SK-N-SH (cell line): ENCODE measurements at regions of chr15 and their contacts with region 1.

Region 1: DNA sequence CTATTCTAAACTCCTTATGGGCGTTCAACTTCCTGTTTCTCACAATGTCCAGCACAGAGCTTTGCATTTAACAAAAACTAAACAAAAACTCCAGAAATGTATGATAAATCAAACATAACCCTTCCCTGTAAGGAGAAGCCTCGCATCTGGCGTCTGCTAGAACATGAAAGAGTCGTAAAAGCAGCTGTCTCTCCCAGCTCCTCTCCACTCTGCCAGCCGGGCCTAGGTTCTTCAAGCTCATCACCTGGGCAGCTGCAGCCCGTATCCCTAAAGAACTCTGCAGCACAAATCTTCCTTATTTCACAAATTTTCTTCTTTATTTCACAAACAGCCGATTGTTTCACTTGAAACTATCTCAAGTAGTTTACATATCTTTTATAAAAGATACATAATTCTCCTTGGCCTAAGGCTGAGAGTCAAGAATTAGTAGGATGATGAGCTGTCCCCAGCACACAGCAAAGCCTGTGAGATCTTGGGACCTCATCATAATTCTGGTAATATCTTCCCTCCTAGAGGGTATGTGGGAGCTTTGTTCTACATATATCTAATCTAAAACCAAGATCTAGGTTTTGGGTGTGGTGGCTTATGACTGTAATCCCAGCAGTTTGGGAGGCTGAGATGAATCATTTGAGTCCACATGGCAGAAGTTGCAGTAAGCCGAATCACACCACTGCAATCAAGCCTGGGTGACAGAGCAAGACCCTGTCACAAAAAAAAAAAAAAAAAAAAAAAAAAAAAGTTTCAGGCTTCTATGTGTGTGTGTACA is 35.3 kb downstream of the ANXA2 start:
- DNase-seq: no peak
- H3K4me3 ChIP-seq: no peak overlapping the region
- H3K27ac ChIP-seq: peak overlapping the region; percentile 65 to 97
- H3K4me1 ChIP-seq: peaks cover 27 to 38% of the 10 kb centered on the region in 2 experiments
- H3K27me3 ChIP-seq: no peaks in the 10 kb centered on the region
- CTCF ChIP-seq: no peak
- EP300 ChIP-seq: 0 out of 4 replicates have a peak, but pooled peaks of 1 of the 2 experiments have one; percentile 12
- RAD21 ChIP-seq: no peak

Region 2: DNA sequence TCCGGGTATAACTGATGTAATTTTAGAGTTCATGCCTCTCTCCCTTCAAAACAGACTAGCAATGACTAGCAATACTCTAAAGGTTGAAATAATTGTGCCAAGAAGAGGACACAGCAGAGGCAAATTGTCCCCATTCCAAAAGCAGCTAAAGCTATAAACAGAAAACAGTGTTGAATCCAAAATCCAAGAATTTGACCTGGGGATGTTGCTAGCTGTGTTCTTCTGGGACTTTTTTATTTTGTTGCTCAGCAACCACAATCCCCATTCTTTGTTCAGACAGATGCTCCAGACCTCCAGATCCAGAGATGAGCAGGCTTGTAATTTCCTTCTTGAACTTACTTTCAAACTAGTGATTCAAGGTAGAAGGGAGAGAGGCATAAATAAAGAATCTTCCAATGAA is 166.9 kb before region 1 on chr15:
- CTCF ChIA-PET with region 1: no interaction called
- POLR2A ChIA-PET with region 1: no interaction called
- DNase-seq: no peak
- H3K4me3 ChIP-seq: no peak overlapping the region
- H3K27ac ChIP-seq: no peak overlapping the region
- H3K4me1 ChIP-seq: no peaks in the 10 kb centered on the region
- H3K27me3 ChIP-seq: no peaks in the 10 kb centered on the region; the same call in 1 of the 2 replicates
- CTCF ChIP-seq: no peak
- EP300 ChIP-seq: no peak
- RAD21 ChIP-seq: no peak

Region 3: GRCh38 chr15:60340207-60340921 is 22.1 kb before region 1 on chr15:
- CTCF ChIA-PET with region 1: interaction called, 14 read pairs
- POLR2A ChIA-PET with region 1: no interaction called
- DNase-seq: no peak
- H3K4me3 ChIP-seq: no peak overlapping the region
- H3K27ac ChIP-seq: no peak overlapping the region
- H3K4me1 ChIP-seq: peaks cover 0 to 4% of the 10 kb centered on the region in 2 experiments; a peak in 1 of 4 replicates
- H3K27me3 ChIP-seq: no peaks in the 10 kb centered on the region
- CTCF ChIP-seq: peak; percentile 36
- EP300 ChIP-seq: no peak
- RAD21 ChIP-seq: no peak

Region 4: DNA sequence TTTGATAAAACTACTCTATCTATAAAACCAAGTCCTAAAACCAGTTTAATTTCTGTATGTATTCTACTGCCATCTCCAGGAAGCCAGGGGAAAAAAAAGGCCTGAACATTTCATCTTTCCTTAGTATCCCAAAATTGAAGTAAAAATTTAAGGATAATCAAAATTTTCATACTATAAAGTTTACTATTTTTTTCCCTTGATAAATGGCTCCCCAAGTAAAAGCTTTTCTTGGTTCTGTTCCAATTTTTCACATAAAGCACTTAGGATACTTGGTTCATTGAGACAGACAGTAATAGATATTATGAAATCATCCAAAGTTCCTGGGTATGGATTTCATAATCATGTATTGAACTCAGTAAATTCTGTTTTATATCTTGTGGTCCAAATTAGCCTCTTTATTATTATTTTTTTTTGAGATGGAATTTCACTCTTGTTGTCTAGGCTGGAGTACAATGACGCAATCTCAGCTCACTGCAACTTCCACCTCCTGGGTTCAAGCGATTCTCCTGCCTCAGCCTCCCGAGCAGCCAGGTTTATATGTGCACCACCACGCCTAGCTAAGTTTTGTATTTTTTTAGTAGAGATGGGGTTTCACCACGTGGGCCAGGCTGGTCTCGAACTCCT is 81.9 kb after region 1 on chr15:
- CTCF ChIA-PET with region 1: interaction called, 46 read pairs
- POLR2A ChIA-PET with region 1: no interaction called
- DNase-seq: peak; percentile 10
- H3K4me3 ChIP-seq: no peak overlapping the region
- H3K27ac ChIP-seq: peak overlapping the region in 1 of 2 experiments; percentile 19; a peak in 1 of 4 replicates
- H3K4me1 ChIP-seq: peaks cover 5 to 6% of the 10 kb centered on the region in 2 experiments; a peak in 3 of 4 replicates
- H3K27me3 ChIP-seq: no peaks in the 10 kb centered on the region
- CTCF ChIP-seq: peak; percentile 82
- EP300 ChIP-seq: no peak
- RAD21 ChIP-seq: peak; percentile 68

Region 5: DNA sequence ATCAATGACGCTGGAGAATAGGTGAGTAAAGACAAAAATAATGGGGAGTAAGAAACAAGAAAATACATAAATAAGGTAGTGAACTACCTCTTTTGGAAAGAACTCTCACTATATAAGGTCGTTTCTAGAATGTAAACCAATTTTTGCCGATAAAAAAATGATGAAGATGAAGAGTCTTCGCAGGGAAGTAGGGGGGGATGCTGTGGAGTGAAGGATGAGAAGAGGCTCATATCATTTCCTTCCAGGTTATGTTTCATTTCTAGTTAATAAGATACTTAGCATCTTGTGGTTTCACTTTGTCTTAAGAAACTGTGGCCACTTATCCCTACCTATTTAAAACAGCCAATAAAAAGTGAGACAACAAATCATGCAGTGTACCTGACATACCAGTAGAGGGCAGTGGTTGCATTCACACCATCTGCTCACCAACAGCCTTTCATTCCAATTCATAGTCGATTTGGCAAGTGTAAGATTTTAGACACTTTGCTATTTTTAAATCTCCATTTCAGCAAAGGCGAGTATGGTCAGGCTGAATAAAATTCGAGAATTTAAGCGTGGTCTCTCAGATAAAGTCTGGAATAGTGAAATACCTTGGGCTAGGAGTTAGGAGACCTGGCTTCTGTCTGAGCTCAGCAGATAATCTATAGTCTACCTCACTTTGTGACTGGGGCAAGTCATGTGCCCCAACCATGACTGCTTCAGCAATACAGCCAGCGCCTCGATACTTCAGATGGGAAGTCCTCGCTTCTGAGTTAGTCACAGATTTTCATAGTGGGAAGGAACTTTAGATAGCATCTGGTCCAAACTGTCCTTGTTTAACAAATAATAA is 145.3 kb after region 1 on chr15:
- CTCF ChIA-PET with region 1: interaction called, 24 read pairs
- POLR2A ChIA-PET with region 1: no interaction called
- DNase-seq: peak; percentile 60
- H3K4me3 ChIP-seq: no peak overlapping the region; a peak in 1 of 4 replicates
- H3K27ac ChIP-seq: no peak overlapping the region
- H3K4me1 ChIP-seq: peaks cover 0 to 2% of the 10 kb centered on the region in 2 experiments; a peak in 2 of 4 replicates
- H3K27me3 ChIP-seq: no peaks in the 10 kb centered on the region
- CTCF ChIP-seq: peak; percentile 96
- EP300 ChIP-seq: no peak
- RAD21 ChIP-seq: peak; percentile 86

Region 6: GRCh38 chr15:60526127-60526625 is 163.7 kb after region 1 on chr15:
- CTCF ChIA-PET with region 1: interaction called, 124 read pairs
- POLR2A ChIA-PET with region 1: no interaction called
- DNase-seq: peak; percentile 42
- H3K4me3 ChIP-seq: no peak overlapping the region
- H3K27ac ChIP-seq: no peak overlapping the region
- H3K4me1 ChIP-seq: peaks cover 0 to 11% of the 10 kb centered on the region in 2 experiments; a peak in 2 of 4 replicates
- H3K27me3 ChIP-seq: no peaks in the 10 kb centered on the region
- CTCF ChIP-seq: no peak
- EP300 ChIP-seq: no peak
- RAD21 ChIP-seq: no peak